Activated T-helper 1 cell treated with anti-CD3 and anti-CD28 coated beads, Interleukin-12 subunit alpha, Interleukin-12 subunit beta, Interleukin-2, Interleukin-4 antibody, amounts not matched to agents 30 ng/mL and 10 ng/mL and 1 ng/mL, durations not matched to agents 14 hours and 24 hours and 36 hours (primary cell): ENCODE measurements at regions of chr9 and their contacts with region 1.

Region 1: DNA sequence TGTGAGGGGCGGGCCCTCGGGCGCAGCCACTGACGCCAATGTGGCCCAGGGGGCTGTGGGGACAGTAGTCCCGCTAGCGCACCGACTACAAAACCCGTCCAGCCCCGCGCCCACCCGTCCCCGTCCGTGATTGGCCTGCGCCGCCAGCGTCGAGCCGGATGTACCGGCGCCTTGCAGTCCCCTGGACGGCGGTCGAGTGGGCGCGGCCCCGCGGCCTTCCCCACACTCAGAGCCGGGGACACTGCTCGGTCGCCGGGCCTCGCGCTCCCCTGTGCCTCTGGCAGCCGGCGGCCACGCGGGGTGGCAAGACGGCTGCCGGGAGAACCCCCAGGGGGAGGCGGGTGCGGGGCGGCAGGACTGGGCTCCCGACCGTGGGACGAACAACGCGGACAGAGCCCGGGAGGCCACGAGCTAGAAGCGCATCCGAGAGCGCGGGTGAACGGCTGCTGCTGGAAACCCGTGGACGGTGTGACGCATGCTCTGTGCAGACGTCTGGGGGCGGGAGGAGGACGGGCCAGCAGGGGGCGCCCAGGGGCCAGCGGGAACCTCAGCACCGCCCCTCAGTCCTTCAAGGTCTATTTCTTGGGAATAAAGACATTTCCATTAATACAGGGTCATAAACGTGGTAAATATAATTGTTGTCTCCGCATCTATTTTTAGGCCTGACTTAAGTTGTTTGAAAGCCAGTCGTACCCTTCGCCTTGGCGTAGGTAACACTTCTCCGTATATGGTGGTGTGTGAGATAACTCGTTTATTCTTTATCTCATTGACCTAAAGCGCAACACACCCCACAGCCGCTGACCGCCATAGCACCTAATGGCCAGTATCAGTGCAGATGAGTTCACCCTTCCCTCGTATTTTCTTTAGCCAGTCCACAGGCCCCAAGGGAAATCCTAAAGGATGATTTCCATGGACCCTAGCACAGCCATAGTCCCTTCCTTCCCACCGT is 629 bp upstream of the BICD2 start:
- DNase-seq: peak; percentile 98
- H3K4me3 Mint-ChIP-seq: peak overlapping the region; percentile 86
- H3K27ac Mint-ChIP-seq: peak overlapping the region; percentile 92
- H3K4me1 Mint-ChIP-seq: peaks cover 45% of the 10 kb centered on the region
- H3K27me3 Mint-ChIP-seq: no peaks in the 10 kb centered on the region

Region 2: GRCh38 chr9:92293452-92294296 is 471.6 kb before region 1 on chr9 and contains the start of gene IARS1:
- intact Hi-C with region 1: loop called (anchors 1 kb)
- DNase-seq: peak; percentile 100
- H3K4me3 Mint-ChIP-seq: peak within 1 kb of the TSS; percentile 98
- H3K27ac Mint-ChIP-seq: peak within 1 kb of the TSS; percentile 98
- H3K4me1 Mint-ChIP-seq: peaks cover 64% of the 10 kb centered on the region
- H3K27me3 Mint-ChIP-seq: no peaks in the 10 kb centered on the region
- total RNA-seq, gene IARS1: 208 and 217 TPM in 2 replicates

Region 3: GRCh38 chr9:92650839-92651621 is 114.2 kb before region 1 on chr9:
- intact Hi-C with region 1: no loop called
- DNase-seq: no peak
- H3K4me3 Mint-ChIP-seq: no peak overlapping the region
- H3K27ac Mint-ChIP-seq: peak overlapping the region; percentile 61
- H3K4me1 Mint-ChIP-seq: peaks cover 13% of the 10 kb centered on the region
- H3K27me3 Mint-ChIP-seq: no peaks in the 10 kb centered on the region

Region 4: GRCh38 chr9:92716557-92716956 is 48.7 kb before region 1 on chr9:
- intact Hi-C with region 1: loop called (anchors 1 kb)
- DNase-seq: peak; percentile 65
- H3K4me3 Mint-ChIP-seq: no peak overlapping the region
- H3K27ac Mint-ChIP-seq: no peak overlapping the region
- H3K4me1 Mint-ChIP-seq: peaks cover 10% of the 10 kb centered on the region
- H3K27me3 Mint-ChIP-seq: no peaks in the 10 kb centered on the region

Region 5: GRCh38 chr9:92954049-92954861 is 189.0 kb after region 1 on chr9:
- intact Hi-C with region 1: loop called (anchors 2 kb)
- DNase-seq: peak; percentile 73
- H3K4me3 Mint-ChIP-seq: peak overlapping the region; percentile 49
- H3K27ac Mint-ChIP-seq: peak overlapping the region; percentile 88
- H3K4me1 Mint-ChIP-seq: peaks cover 56% of the 10 kb centered on the region
- H3K27me3 Mint-ChIP-seq: peaks cover 4% of the 10 kb centered on the region

Region 6: GRCh38 chr9:93134015-93134739 is 368.9 kb after region 1 on chr9 and contains the start of gene NINJ1:
- intact Hi-C with region 1: loop called (anchors 10 kb)
- DNase-seq: peak; percentile 89
- H3K4me3 Mint-ChIP-seq: peak within 1 kb of the TSS; percentile 94
- H3K27ac Mint-ChIP-seq: peak within 1 kb of the TSS; percentile 96
- H3K4me1 Mint-ChIP-seq: peaks cover 57% of the 10 kb centered on the region
- H3K27me3 Mint-ChIP-seq: peaks cover 2% of the 10 kb centered on the region
- total RNA-seq, gene NINJ1: 94.2 and 95.3 TPM in 2 replicates